Endothelial cell of umbilical vein (primary cell): ENCODE measurements at regions of chr12 and their contacts with region 1.

Region 1: DNA sequence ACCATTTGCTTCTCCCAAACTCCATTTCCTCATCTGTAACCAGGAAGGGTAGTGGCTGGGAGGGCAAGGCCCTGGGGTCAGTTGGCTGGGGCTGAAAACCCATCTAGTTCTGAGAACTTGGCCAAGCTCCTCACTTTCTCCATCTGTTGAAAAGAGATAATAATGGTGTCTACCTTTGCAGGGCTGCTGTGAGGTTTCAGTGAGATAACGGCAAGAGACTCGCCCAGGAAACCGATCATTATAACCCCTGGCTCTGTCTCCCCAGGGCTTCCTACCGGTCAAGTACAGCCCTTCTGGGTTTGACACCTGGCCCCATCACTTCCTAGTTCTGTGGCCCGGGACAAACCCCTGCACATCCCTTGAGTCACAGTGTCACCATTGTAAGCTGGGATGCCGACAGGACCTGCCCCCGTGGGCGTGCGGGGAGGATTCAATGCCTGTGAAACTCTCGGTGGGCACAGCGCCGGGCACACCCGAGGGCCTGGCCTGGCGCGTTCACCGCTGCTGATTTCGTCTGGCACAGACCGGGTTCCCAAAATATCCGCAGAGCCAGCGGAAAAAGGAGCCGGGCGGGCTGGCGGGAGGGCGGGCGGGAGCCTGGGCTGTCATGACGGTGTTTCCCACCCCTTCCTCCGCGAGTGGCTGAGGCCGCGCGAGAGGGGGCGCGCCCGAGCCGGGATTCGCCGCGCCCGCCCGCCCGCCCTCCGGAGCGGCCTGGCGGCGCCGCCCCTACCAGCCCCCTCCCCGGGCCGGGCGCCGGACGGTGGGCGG is 4.4 kb downstream of the KMT5A start:
- DNase-seq: peak; percentile 61
- H3K4me3 ChIP-seq: peak overlapping the region in 2 of 3 experiments; percentile 33 to 46
- H3K27ac ChIP-seq: peak overlapping the region; percentile 39
- H3K4me1 ChIP-seq: peaks cover 36% of the 10 kb centered on the region
- H3K27me3 ChIP-seq: no peaks in the 10 kb centered on the region
- CTCF ChIP-seq: no peak
- POLR2A ChIP-seq: peak; percentile 55

Region 2: GRCh38 chr12:123436017-123436964 is 47.9 kb after region 1 on chr12 and contains the start of gene RILPL2:
- CTCF ChIA-PET with region 1: interaction called, 3 read pairs
- POLR2A ChIA-PET with region 1: no interaction called
- dilution Hi-C with region 1: no loop called
- intact Hi-C with region 1: loop called (anchors 2 kb)
- DNase-seq: peak; percentile 77
- H3K4me3 ChIP-seq: peak within 1 kb of the TSS; percentile 44 to 57 (median 46)
- H3K27ac ChIP-seq: peak within 1 kb of the TSS; percentile 1
- H3K4me1 ChIP-seq: peaks cover 13% of the 10 kb centered on the region
- H3K27me3 ChIP-seq: no peaks in the 10 kb centered on the region
- CTCF ChIP-seq: no peak
- POLR2A ChIP-seq: no peak
- total RNA-seq, gene RILPL2: 4.6 and 7.2 TPM in 2 replicates

Region 3: GRCh38 chr12:123445388-123446351 is 57.3 kb after region 1 on chr12:
- CTCF ChIA-PET with region 1: no interaction called
- POLR2A ChIA-PET with region 1: no interaction called
- dilution Hi-C with region 1: no loop called
- intact Hi-C with region 1: loop called (anchors 5 kb)
- DNase-seq: peak; percentile 94
- H3K4me3 ChIP-seq: no peak overlapping the region
- H3K27ac ChIP-seq: peak overlapping the region; percentile 68
- H3K4me1 ChIP-seq: peaks cover 22% of the 10 kb centered on the region
- H3K27me3 ChIP-seq: no peaks in the 10 kb centered on the region
- CTCF ChIP-seq: no peak
- POLR2A ChIP-seq: peak; percentile 15

Region 4: DNA sequence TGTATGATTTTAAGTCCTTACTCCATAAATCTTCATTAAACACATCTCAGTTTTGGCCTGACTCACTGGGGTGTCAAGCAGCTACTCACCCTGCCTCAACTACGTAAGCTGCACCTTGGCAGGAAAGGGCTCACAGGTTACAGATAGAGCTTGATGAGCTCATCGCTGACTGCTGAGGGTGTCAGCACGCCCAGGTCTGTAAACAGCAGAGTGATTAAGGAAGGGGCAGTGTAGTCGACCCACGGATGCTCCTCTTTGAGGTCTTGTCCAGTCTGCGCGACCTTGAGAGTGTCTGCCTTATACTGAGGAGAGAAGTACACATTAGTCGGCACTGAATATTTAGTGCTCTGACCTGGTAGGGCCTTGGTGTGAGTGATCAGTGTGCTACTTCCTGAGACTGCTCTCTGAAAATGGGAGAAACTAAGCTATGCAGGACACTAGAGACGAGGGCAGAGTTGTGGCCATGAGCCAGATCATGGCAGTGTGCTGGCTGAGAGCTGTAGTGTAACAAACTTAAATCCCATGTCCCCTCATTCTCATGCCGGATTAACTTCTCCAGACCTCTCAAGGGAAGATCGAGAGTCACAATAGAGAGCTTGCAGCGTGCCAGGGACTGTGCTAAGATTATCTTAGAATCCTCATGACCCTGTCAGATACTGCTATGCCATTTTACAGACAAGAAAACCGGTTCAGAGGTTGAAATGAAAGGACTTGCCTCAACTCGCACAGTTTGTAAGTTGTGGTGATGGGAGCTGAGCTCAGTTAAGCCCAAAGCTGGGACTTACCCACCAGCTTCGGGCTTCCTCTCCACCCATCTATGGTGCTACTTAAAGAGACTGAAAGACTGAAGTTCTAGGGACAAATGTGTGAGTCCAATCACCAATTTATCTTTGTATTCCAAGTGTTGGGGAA is 233.5 kb after region 1 on chr12:
- CTCF ChIA-PET with region 1: interaction called, 3 read pairs
- POLR2A ChIA-PET with region 1: no interaction called
- dilution Hi-C with region 1: loop called (anchors 10 kb)
- intact Hi-C with region 1: no loop called
- DNase-seq: no peak
- H3K4me3 ChIP-seq: no peak overlapping the region
- H3K27ac ChIP-seq: no peak overlapping the region
- H3K4me1 ChIP-seq: no peaks in the 10 kb centered on the region
- H3K27me3 ChIP-seq: no peaks in the 10 kb centered on the region
- CTCF ChIP-seq: no peak
- POLR2A ChIP-seq: no peak

Region 5: GRCh38 chr12:123854918-123855317 is 466.6 kb after region 1 on chr12:
- CTCF ChIA-PET with region 1: no interaction called
- POLR2A ChIA-PET with region 1: no interaction called
- dilution Hi-C with region 1: no loop called
- intact Hi-C with region 1: no loop called
- DNase-seq: no peak
- H3K4me3 ChIP-seq: no peak overlapping the region
- H3K27ac ChIP-seq: no peak overlapping the region
- H3K4me1 ChIP-seq: no peaks in the 10 kb centered on the region
- H3K27me3 ChIP-seq: peaks cover 4 to 5% of the 10 kb centered on the region in 2 experiments
- CTCF ChIP-seq: no peak
- POLR2A ChIP-seq: no peak